Left ventricle myocardium superior (tissue), 1 donor: ENCODE measurements at regions of chr4 and their contacts with region 1.

Region 1: GRCh38 chr4:3037957-3038461 is 36.3 kb downstream of the HTT-AS start:
- DNase-seq: peak; percentile 87
- ATAC-seq: peak; percentile 70

Region 2: GRCh38 chr4:2977211-2978088 is 60.6 kb before region 1 on chr4:
- intact Hi-C with region 1: loop called (anchors 10 kb)
- DNase-seq: no peak
- ATAC-seq: peak; percentile 76